Mammary epithelial cell (primary cell): ENCODE measurements at regions of chr2 and their contacts with region 1.

Region 1: GRCh38 chr2:172427256-172427989 is at the start of gene ITGA6:
- DNase-seq: peak; percentile 91
- H3K4me3 ChIP-seq: peak within 1 kb of the TSS; percentile 86 to 95 (median 87)
- H3K27ac ChIP-seq: peak within 1 kb of the TSS; percentile 93
- H3K4me1 ChIP-seq: peaks cover 23% of the 10 kb centered on the region
- H3K27me3 ChIP-seq: no peaks in the 10 kb centered on the region
- CTCF ChIP-seq: peak in 1 of 2 donors; percentile 24
- total RNA-seq, gene ITGA6: 562 to 887 TPM

Region 2: GRCh38 chr2:172339371-172340010 is 87.9 kb before region 1 on chr2:
- CTCF ChIA-PET with region 1: no interaction called
- dilution Hi-C with region 1: no loop called
- in situ Hi-C with region 1: no loop called
- intact Hi-C with region 1: loop called (anchors 1 kb)
- DNase-seq: peak; percentile 33
- H3K4me3 ChIP-seq: no peak overlapping the region
- H3K27ac ChIP-seq: no peak overlapping the region
- H3K4me1 ChIP-seq: peaks cover 4% of the 10 kb centered on the region
- H3K27me3 ChIP-seq: no peaks in the 10 kb centered on the region
- CTCF ChIP-seq: peak in 1 of 2 donors; percentile 15

Region 3: DNA sequence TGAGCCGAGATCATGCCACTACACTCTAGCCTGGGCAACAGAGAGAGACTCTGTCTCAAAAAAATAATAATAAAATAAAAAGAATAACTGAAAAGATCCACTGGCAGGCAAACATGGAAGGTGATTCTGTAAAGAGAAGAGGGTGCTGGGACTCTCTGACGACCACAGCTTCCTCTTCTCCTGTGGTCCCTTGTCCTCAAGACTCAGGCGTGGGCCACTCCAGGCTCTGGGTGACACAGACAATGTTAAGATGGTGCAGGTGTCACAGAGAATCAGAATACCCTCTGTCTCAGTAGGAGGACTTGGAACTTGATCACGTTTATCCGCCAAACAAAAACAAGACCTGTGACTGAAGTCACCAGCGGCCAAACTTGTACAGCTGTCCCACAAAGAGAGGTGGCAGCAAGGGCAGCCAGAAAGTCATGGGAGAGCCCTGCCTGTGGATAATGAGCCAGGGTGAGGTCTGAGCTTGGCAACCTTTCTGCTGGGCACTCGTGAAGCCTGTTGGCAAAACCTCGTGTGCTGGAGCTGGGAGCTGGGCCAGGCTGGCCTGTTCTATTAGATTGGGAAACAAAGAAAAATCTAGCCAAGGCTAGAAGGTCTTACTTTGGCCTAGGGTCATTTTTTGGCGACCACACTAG is 76.5 kb before region 1 on chr2:
- CTCF ChIA-PET with region 1: no interaction called
- dilution Hi-C with region 1: no loop called
- in situ Hi-C with region 1: no loop called
- intact Hi-C with region 1: loop called (anchors 5 kb)
- DNase-seq: no peak
- H3K4me3 ChIP-seq: no peak overlapping the region
- H3K27ac ChIP-seq: no peak overlapping the region
- H3K4me1 ChIP-seq: no peaks in the 10 kb centered on the region
- H3K27me3 ChIP-seq: no peaks in the 10 kb centered on the region
- CTCF ChIP-seq: no peak

Region 4: GRCh38 chr2:172572981-172573380 is 145.6 kb after region 1 on chr2:
- CTCF ChIA-PET with region 1: no interaction called
- dilution Hi-C with region 1: no loop called
- in situ Hi-C with region 1: no loop called
- intact Hi-C with region 1: no loop called
- DNase-seq: no peak
- H3K4me3 ChIP-seq: no peak overlapping the region
- H3K27ac ChIP-seq: no peak overlapping the region
- H3K4me1 ChIP-seq: no peaks in the 10 kb centered on the region
- H3K27me3 ChIP-seq: no peaks in the 10 kb centered on the region
- CTCF ChIP-seq: no peak